ENCODE measurements at regions of chr13 and their contacts with region 1.

Region 1: GRCh38 chr13:95834134-95834765 is 157.3 kb downstream of the DNAJC3 start:
- DNase-seq: peak; percentile 31 to 71 (median 58)
- ATAC-seq: peak; percentile 90
- H3K4me3 ChIP-seq: no peak overlapping the region
- H3K4me3 Mint-ChIP-seq: no peak overlapping the region
- H3K27ac ChIP-seq: no peak overlapping the region
- H3K27ac Mint-ChIP-seq: no peak overlapping the region
- H3K4me1 ChIP-seq: no peaks in the 10 kb centered on the region
- H3K4me1 Mint-ChIP-seq: peaks cover 0 to 2% (median 0%) of the 10 kb centered on the region in 7 donors
- H3K27me3 ChIP-seq: no peaks in the 10 kb centered on the region
- H3K27me3 Mint-ChIP-seq: peaks cover 18 to 36% (median 20%) of the 10 kb centered on the region in 5 donors

Region 2: GRCh38 chr13:94674609-94675348 is 1159.5 kb before region 1 on chr13:
- CTCF ChIA-PET with region 1: no interaction called
- POLR2A ChIA-PET with region 1: no interaction called
- intact Hi-C with region 1: loop called in 1 of 2 experiments (anchors 5 kb)
- DNase-seq: peak in 7 of 9 donors; percentile 12 to 49 (median 34)
- ATAC-seq: peak; percentile 55
- H3K4me3 ChIP-seq: no peak overlapping the region
- H3K4me3 Mint-ChIP-seq: no peak overlapping the region
- H3K27ac ChIP-seq: no peak overlapping the region
- H3K27ac Mint-ChIP-seq: no peak overlapping the region
- H3K4me1 ChIP-seq: no peaks in the 10 kb centered on the region
- H3K4me1 Mint-ChIP-seq: no peaks in the 10 kb centered on the region
- H3K27me3 ChIP-seq: no peaks in the 10 kb centered on the region
- H3K27me3 Mint-ChIP-seq: peaks cover 12 to 31% (median 20%) of the 10 kb centered on the region in 5 donors

Region 3: DNA sequence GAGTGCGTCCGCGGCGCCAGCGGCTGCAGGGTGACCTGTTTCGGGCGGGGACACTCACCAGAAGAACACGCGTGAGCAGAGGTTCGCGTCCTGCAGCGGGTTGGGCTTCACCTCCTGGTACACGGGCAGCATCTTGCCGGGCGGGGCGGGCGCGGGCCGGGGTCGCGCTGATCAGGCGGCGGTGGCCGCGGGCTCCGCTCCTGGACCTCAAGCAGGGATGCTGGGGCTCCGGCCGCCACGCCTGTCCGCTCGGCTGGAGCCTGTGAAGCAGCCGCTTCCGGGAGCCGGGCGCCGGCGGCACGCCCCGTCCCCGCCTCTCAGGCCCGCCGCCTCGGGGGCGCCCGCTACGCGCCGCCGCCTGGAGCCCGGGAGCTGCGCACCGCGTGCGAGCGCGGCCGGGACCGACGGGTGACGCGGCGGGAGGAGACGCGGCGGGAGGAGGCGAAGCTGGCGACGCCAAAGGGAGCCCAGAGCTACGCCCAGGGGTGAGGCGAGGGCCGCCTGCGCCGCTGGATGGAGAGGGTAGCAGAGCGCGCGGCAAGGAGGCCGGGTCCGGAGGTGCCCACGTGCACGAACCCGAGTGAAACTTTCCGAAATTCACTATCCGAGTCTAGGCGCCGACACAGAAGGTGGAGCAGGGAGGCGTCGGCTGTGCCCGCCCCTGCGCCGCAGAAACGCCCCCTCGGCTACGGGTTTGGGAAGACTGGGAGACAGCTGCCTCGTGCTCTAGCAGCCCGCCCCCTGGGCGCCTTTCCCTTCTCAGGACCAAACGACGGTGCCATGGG is 532.9 kb before region 1 on chr13 and contains the start of gene ABCC4:
- CTCF ChIA-PET with region 1: interaction called, 3 read pairs
- POLR2A ChIA-PET with region 1: no interaction called
- intact Hi-C with region 1: loop called in 1 of 2 experiments (anchors 2 kb)
- DNase-seq: peak; percentile 22 to 78 (median 48)
- ATAC-seq: peak; percentile 86
- H3K4me3 ChIP-seq: peak within 1 kb of the TSS; percentile 50
- H3K4me3 Mint-ChIP-seq: peak within 1 kb of the TSS; percentile 84 to 96 (median 87)
- H3K27ac ChIP-seq: peak within 1 kb of the TSS; percentile 41
- H3K27ac Mint-ChIP-seq: peak within 1 kb of the TSS in 8 of 9 donors; percentile 6 to 86 (median 66)
- H3K4me1 ChIP-seq: peaks cover 0 to 5% of the 10 kb centered on the region in 2 donors
- H3K4me1 Mint-ChIP-seq: peaks cover 7 to 41% (median 27%) of the 10 kb centered on the region in 7 donors
- H3K27me3 ChIP-seq: no peaks in the 10 kb centered on the region
- H3K27me3 Mint-ChIP-seq: peaks cover 0 to 15% (median 0%) of the 10 kb centered on the region in 5 donors
- total RNA-seq, gene ABCC4: 5.8 to 9.2 (median 7.5) TPM

Region 4: GRCh38 chr13:95536632-95537241 is 297.5 kb before region 1 on chr13:
- CTCF ChIA-PET with region 1: interaction called, 17 read pairs
- POLR2A ChIA-PET with region 1: no interaction called
- intact Hi-C with region 1: loop called (anchors 1 kb)
- DNase-seq: peak in 1 of 9 donors; percentile 10
- ATAC-seq: no peak
- H3K4me3 ChIP-seq: no peak overlapping the region
- H3K4me3 Mint-ChIP-seq: no peak overlapping the region
- H3K27ac ChIP-seq: no peak overlapping the region
- H3K27ac Mint-ChIP-seq: no peak overlapping the region
- H3K4me1 ChIP-seq: no peaks in the 10 kb centered on the region
- H3K4me1 Mint-ChIP-seq: peaks cover 0 to 6% (median 0%) of the 10 kb centered on the region in 7 donors
- H3K27me3 ChIP-seq: no peaks in the 10 kb centered on the region
- H3K27me3 Mint-ChIP-seq: peaks cover 20 to 38% (median 28%) of the 10 kb centered on the region in 5 donors

Region 5: GRCh38 chr13:95822303-95822702 is 11.9 kb before region 1 on chr13:
- CTCF ChIA-PET with region 1: interaction called, 17 read pairs
- POLR2A ChIA-PET with region 1: no interaction called
- intact Hi-C with region 1: no loop called
- DNase-seq: no peak
- ATAC-seq: no peak
- H3K4me3 ChIP-seq: no peak overlapping the region
- H3K4me3 Mint-ChIP-seq: no peak overlapping the region
- H3K27ac ChIP-seq: no peak overlapping the region
- H3K27ac Mint-ChIP-seq: no peak overlapping the region
- H3K4me1 ChIP-seq: no peaks in the 10 kb centered on the region
- H3K4me1 Mint-ChIP-seq: no peaks in the 10 kb centered on the region
- H3K27me3 ChIP-seq: no peaks in the 10 kb centered on the region
- H3K27me3 Mint-ChIP-seq: peaks cover 14 to 29% (median 28%) of the 10 kb centered on the region in 5 donors